ENCODE measurements at regions of chr19 and their contacts with region 1.

Region 1: DNA sequence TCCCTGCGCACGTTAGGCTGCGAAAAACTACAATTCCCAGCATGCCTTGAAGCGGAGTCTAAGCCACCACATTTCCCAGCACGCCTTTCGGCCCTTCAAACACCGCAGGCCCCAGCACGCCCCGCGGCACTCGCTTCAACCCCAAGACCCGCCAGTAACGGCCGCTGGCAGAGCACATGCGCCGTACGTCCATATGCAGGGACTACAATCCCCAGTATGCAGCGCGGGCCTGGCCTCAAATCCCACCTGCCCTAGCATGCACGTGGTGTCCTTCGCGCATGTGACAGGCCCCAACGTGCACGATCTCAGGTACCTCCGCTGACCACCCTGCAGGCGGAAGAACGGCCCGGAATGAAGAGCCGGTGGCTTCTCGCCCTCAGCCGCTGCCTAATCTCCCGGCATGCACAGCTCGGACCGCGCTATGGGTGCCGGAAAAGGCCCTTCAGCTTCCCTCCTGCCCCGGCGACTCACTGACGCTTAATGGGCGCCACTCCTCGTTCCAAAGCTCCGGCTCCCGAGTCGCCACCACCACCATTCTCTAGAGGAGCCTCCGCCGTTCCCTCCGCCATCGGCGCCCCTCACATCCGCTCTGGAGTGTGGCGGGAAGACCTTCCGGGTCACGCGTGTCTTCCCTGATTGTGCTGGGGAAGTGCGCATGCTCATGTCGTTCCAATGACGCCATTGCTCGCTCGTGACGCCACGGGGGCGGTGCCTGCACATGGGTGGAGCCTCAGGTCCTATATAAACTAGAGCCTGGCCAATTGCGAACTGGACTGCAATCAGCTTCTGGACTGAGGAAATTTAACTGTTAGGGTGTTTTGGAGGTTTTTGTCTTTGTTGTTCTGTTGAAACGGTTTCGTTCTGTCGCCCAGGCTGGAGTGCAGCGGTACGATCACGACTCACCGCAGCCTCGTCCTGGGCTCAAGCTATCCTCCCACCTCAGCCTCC is at the start of gene DUS3L:
- DNase-seq: peak; percentile 98
- H3K4me3 Mint-ChIP-seq: peak within 1 kb of the TSS; percentile 96
- H3K27ac Mint-ChIP-seq: peak within 1 kb of the TSS; percentile 100
- H3K4me1 Mint-ChIP-seq: peaks cover 12% of the 10 kb centered on the region
- H3K27me3 Mint-ChIP-seq: no peaks in the 10 kb centered on the region
- total RNA-seq, gene DUS3L: 85.8 and 89.8 TPM in 2 replicates

Region 2: DNA sequence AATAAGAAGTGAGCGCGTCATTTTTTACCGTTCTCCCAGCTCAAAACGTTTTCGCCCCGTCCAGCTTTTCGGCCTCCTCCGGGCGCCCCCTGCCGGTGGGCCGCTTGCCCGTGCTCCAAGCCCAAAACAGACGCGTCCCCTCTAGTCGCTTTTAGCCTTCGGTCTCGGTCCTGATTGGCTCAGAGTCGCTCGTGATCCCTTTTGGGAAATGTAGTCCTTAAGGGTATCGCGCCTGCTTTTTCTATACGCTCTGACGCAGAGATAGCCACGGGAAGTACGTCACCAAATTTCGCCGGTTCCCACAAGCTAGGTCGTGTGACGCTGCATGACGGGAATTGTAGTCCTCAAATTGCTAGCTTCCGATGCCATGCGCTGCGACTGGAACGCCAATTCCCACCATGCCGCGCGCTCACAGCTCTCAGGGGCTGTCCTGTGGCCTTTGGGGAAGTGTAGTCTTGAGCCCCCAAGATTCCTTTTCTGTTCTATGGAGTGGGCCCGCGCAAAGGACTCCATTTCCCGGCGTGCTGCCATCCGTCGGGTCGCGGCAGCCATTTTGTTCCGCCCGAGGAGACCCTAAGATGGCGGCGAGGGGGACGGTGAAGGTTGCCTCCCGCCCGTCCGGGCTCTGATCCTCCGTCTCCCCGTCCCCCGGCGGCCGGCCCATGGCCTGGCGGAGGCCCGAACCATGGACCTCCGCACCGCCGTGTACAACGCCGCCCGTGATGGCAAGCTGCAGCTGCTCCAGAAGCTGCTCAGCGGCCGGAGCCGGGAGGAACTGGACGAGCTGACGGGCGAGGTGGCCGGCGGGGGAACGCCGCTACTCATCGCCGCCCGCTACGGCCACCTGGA is 999.5 kb before region 1 on chr19 and contains the start of gene FEM1A:
- intact Hi-C with region 1: loop called (anchors 2 kb)
- DNase-seq: peak; percentile 99
- H3K4me3 Mint-ChIP-seq: peak within 1 kb of the TSS; percentile 89
- H3K27ac Mint-ChIP-seq: peak within 1 kb of the TSS; percentile 91
- H3K4me1 Mint-ChIP-seq: peaks cover 14% of the 10 kb centered on the region
- H3K27me3 Mint-ChIP-seq: no peaks in the 10 kb centered on the region
- total RNA-seq, gene FEM1A: 22.9 and 23.3 TPM in 2 replicates

Region 3: GRCh38 chr19:5680437-5681368 is 110.1 kb before region 1 on chr19 and contains the starts of genes HSD11B1L and MICOS13:
- intact Hi-C with region 1: loop called (anchors 1 kb)
- DNase-seq: peak; percentile 99
- H3K4me3 Mint-ChIP-seq: peak within 1 kb of the TSS; percentile 99
- H3K27ac Mint-ChIP-seq: peak within 1 kb of the TSS; percentile 97
- H3K4me1 Mint-ChIP-seq: peaks cover 22% of the 10 kb centered on the region
- H3K27me3 Mint-ChIP-seq: peaks cover 7% of the 10 kb centered on the region
- total RNA-seq, gene HSD11B1L: 2.2 and 2.6 TPM in 2 replicates
- total RNA-seq, gene MICOS13: 56.2 and 63.4 TPM in 2 replicates

Region 4: DNA sequence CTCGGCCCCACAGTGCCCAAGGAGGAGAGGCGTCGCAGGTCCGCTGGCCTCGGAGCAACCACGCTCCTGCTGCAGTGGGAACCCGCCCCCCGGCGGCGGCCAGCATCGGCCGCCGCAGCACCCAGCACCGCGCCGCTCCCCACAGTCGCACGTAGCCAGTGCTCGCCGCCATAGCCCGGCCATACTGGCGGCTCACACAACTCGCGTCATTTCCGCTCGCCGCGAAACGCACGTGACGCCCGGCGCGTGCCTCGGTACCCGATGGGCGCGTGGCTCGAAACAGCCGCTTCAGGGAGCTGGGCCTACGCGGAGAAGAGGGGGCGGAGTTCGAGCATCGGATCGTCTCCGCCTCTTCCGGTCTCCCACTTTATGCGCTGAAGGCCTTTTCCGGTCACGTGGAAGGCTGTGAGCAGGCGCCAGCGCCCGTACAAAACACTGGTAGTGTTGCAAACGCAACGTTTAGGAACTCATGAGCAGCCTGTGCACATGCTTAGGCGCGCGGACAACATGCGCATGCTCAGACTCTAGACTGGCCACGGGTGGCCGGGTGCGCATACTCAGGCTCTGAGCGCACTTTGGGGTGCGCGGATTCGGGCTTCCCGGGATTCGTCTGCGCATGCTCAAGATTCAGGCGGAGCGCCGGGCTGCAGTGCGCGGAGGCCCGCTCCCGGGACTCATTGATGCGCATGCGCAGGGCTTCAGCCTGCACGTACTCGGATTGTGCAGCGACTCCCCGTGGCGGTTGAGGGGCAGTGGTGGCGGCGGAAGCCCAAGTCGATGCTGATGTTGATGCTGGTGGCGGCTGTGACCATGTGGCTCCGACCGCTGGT is 70.7 kb before region 1 on chr19 and contains the starts of genes CATSPERD and LONP1:
- intact Hi-C with region 1: loop called (anchors 1 kb)
- DNase-seq: peak; percentile 99
- H3K4me3 Mint-ChIP-seq: peak within 1 kb of the TSS; percentile 97
- H3K27ac Mint-ChIP-seq: peak within 1 kb of the TSS; percentile 97
- H3K4me1 Mint-ChIP-seq: peaks cover 25% of the 10 kb centered on the region
- H3K27me3 Mint-ChIP-seq: no peaks in the 10 kb centered on the region
- total RNA-seq, gene CATSPERD: not detected in 2 replicates
- total RNA-seq, gene LONP1: 220 and 240 TPM in 2 replicates

Region 5: DNA sequence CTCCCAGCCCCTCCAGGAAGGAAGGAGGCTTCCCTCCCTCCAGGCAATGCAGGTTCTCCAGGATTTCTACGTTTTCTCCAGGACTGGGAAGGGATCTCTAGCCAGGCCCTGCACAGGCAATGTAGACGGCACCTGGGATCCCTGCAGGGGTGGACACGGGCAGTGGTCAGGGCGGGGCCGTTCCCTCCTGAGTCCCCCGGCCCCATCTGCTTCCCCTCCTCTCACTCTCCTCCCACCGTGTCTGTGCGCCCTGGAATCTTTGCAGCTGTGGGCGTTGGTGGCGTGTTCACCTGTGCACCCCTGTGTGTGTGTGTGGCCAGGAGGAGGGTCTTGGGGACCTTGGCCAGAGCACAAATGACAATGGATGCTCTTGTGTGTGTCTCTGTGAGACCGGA is 24.0 kb after region 1 on chr19:
- intact Hi-C with region 1: no loop called
- DNase-seq: no peak
- H3K4me3 Mint-ChIP-seq: no peak overlapping the region
- H3K27ac Mint-ChIP-seq: no peak overlapping the region
- H3K4me1 Mint-ChIP-seq: no peaks in the 10 kb centered on the region
- H3K27me3 Mint-ChIP-seq: no peaks in the 10 kb centered on the region

Region 6: GRCh38 chr19:5827891-5828660 is 37.2 kb after region 1 on chr19:
- intact Hi-C with region 1: loop called (anchors 1 kb)
- DNase-seq: peak; percentile 99
- H3K4me3 Mint-ChIP-seq: peak overlapping the region; percentile 100
- H3K27ac Mint-ChIP-seq: peak overlapping the region; percentile 100
- H3K4me1 Mint-ChIP-seq: peaks cover 8% of the 10 kb centered on the region
- H3K27me3 Mint-ChIP-seq: no peaks in the 10 kb centered on the region

Region 7: GRCh38 chr19:5913739-5914357 is 123.0 kb after region 1 on chr19 and contains the start of gene CAPS:
- intact Hi-C with region 1: no loop called
- DNase-seq: no peak
- H3K4me3 Mint-ChIP-seq: no peak within 1 kb of the TSS
- H3K27ac Mint-ChIP-seq: no peak within 1 kb of the TSS
- H3K4me1 Mint-ChIP-seq: no peaks in the 10 kb centered on the region
- H3K27me3 Mint-ChIP-seq: no peaks in the 10 kb centered on the region
- total RNA-seq, gene CAPS: 4.0 and 4.1 TPM in 2 replicates